ENCODE measurements at regions of chr14 and their contacts with region 1.

Region 1: GRCh38 chr14:24431569-24432258 is 2.0 kb downstream of the KHNYN start:
- DNase-seq: peak; percentile 90
- CTCF ChIP-seq: peak; percentile 96

Region 2: DNA sequence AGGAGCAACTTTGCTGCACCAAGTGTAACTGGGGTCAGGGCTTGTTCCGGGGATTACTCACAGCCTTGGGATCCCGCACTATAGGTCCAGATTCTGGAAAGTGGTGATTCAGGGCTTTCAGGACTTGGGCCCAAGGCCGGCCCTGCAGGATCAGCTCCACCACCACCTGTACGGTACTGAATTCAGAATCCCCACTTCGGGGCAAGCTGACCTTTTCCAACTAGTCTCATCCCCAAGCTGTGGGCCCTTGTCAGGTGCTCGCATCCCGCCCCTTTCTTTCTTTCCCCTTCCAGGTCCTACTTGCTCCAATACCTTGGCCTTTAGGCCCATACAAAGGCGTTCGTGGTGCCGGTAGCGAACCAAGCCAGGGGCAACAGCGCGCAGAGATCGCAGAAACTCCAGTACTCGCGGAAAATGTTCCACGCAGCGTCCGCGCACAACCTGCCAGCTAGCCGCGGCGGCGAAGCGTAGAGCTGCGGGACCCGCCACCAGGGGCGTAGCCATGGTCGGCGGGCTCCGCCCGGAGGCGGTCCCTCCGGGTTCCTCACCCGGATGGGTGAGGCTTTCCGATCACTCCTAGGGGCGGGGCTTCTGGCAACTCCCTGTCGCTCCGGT is 189.8 kb before region 1 on chr14:
- CTCF ChIA-PET with region 1: interaction called, 38 read pairs
- POLR2A ChIA-PET with region 1: interaction called, 7 read pairs
- DNase-seq: peak; percentile 97
- CTCF ChIP-seq: peak; percentile 11

Region 3: GRCh38 chr14:24310646-24311604 is 120.8 kb before region 1 on chr14 and contains the start of gene LTB4R:
- CTCF ChIA-PET with region 1: interaction called, 114 read pairs
- POLR2A ChIA-PET with region 1: interaction called, 3 read pairs
- DNase-seq: peak; percentile 65
- CTCF ChIP-seq: peak; percentile 58

Region 4: DNA sequence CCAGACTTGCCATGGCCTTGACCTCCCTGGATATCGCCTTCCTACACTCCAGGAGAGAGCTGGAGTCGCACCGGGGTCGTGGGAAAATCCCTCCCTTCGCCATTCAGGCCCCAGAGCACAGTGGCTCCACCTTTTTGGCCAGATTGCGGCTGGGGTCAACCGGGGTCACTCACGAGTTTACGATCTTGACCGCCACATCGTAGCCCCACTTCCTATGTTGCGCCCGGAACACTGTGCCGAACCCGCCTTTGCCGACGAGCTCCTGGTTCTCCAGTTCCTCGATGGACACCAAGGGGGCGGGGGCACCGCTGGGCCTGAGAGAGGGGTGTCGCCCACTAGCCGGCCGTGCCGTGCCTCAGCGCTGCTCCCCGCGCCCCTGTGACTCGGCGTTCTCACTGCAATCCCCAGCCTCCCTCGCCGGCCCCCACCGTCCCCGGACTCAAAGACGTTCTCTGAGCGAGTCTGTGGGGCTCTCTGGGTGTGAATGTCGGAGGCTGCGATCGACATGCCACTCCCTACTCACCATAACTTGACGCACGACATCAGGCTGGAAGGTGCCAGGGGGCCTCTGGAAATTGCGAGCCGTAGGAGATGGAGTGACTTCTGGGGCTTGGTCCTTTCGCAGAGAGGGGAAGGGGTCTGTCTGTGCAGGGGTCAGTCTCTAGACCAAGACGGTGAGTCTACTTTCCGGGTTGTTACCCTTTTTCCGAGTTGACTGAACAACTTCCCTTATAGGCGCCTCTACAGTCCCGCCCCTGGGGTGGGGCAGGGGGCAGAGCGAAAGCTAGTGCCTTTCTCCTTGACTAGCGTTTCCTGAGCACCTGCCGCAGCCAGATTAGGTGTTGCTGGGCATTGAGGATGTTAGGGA is 92.2 kb before region 1 on chr14 and contains the start of gene RIPK3:
- CTCF ChIA-PET with region 1: interaction called, 629 read pairs
- POLR2A ChIA-PET with region 1: interaction called, 5 read pairs
- DNase-seq: peak; percentile 84
- CTCF ChIP-seq: no peak

Region 5: DNA sequence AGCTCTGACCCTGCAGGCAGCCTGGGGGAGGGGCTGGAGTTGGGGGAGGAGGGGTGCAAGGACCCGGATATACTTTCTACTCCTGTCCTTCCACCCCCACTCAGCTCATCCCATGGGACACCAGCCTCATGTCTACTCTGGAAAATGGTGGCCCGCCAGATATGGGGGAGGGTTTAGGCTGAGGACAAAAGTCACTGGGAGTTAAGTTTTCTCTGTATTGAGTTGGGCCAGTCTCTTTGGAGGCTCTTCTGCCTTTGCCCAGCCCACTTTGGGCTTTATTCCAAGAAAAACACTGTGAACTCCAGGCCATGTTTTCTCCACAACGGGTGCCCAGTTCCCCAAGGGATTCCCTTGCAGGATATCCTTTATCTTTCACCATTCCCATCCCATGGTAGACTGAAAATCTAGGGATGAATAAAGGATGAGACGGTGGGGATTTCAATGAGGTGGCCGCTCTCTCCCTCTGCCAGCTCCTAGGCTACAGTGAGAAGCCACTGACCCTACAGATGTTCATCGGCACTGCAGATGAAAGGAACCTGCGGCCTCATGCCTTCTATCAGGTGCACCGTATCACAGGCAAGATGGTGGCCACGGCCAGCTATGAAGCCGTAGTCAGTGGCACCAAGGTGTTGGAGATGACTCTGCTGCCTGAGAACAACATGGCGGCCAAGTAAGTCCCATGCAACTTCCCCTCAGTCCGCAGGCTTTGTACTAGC is 58.9 kb before region 1 on chr14:
- CTCF ChIA-PET with region 1: interaction called, 10 read pairs
- POLR2A ChIA-PET with region 1: interaction called, 3 read pairs
- DNase-seq: no peak
- CTCF ChIP-seq: no peak

Region 6: DNA sequence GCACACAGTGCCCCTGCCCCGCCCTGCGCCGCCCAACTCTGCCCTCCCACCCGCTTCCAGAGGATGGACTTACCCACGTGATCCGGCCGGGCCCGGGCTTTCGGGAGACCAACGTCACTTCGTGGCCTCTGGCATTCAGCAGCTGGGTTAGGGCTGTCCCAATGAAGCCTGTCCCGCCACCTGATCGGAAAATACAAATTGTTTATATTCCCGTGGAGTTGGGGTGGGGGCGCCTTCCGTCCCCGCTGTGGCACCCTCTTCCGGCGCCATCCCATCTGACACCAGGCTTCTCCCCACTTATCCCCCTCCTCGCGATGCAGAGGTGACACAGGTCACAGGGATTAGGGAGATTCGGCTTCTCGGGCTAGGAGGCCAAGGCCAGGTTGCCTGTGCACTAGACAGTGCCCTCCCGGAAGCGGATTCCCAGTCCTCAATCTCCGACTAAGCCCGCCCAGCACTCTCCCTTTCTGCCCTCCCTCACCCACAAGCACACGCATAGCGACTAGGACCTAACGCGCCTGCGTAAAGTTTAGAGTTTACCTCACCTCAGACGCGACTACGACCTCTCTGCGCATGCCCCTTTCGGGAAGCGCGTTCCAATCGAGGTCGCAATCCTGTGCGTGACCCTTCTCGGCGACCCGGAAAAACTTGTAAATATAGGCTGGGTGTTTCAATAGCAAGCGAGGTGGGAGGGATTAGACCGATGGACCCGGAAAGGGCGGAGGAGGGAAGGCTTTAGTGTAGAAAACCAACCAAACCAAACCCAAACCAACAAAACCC is 10.7 kb after region 1 on chr14 and contains the start of gene SDR39U1:
- CTCF ChIA-PET with region 1: interaction called, 69 read pairs
- POLR2A ChIA-PET with region 1: interaction called, 12 read pairs
- DNase-seq: peak; percentile 95
- CTCF ChIP-seq: no peak

Region 7: DNA sequence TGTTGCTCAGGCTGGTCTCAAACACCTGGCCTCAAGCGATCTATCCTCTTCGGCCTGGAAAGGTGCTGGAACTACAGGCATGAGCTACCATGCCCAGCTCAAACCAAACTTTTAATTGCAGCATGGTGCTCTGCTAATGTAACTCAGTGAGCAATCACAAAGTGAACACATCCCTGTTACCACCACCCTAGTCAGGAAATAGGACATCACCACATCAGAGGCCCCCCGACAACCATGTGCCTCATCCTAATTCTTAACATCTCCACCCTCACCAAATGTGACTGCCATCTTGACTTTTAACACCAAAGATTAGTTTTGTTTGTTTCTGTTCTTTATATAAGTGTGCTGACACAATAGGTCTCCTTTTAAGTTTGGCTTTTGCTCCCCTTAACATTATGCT is 33.7 kb after region 1 on chr14:
- CTCF ChIA-PET with region 1: no interaction called
- POLR2A ChIA-PET with region 1: no interaction called
- DNase-seq: no peak
- CTCF ChIP-seq: no peak